ENCODE measurements at regions of chr1 and their contacts with region 1.

Region 1: DNA sequence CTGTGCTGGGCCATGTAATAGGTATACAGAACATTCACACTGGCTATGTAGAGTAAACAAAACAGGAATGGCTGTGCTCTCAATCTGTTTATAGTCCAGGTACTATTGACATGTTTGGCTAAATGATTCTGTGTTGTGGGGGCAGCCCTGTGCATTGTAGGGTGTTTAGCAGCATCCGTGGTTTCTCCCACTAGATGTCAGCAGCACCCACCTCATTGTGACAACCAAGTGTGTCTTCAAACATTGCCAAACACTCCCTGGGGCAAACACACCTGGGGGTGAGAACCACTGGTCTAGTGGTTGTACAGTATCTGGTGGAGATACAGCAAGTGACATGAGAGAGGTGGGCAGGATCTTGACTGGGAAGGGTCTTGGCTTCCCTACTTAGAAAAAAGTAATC is 80.4 kb upstream of the SPATA6 start:
- DNase-seq: no peak
- ATAC-seq: peak in 3 of 4 donors; percentile 31 to 47 (median 41)
- H3K4me3 ChIP-seq: no peak overlapping the region
- H3K27ac ChIP-seq: no peak overlapping the region
- H3K4me1 ChIP-seq: peaks cover 0 to 11% (median 0%) of the 10 kb centered on the region in 12 donors
- H3K27me3 ChIP-seq: no peaks in the 10 kb centered on the region
- CTCF ChIP-seq: peak in 9 of 12 donors; percentile 13 to 43 (median 28)
- POLR2A ChIP-seq: no peak

Region 2: DNA sequence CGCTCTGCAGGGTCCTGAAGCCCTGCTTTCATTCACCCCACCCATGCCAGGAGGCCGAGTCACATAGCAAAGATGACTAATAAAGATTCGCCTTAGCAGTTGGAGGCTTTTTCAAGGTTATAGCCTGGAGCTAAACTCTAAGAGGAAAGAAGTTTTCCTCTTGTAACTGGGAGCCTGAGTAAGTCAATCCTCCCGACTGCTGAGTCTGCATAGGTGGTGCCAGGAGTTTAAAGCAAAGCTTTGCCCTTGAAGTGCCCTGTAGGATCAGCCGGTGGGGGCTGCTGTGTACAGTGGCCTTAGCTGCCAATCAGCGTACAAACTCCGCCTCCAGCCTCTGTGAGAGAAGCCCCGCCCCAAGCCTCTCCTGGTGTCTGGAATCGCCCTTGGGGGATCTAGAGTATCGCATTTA is 67.1 kb after region 1 on chr1:
- intact Hi-C with region 1: no loop called
- DNase-seq: peak in 2 of 5 donors; percentile 27 to 29
- ATAC-seq: peak in 3 of 4 donors; percentile 37 to 58 (median 37)
- H3K4me3 ChIP-seq: peak overlapping the region in 1 of 12 donors; percentile 26
- H3K27ac ChIP-seq: no peak overlapping the region
- H3K4me1 ChIP-seq: peaks cover 0 to 11% (median 0%) of the 10 kb centered on the region in 12 donors
- H3K27me3 ChIP-seq: peaks cover 0 to 10% (median 0%) of the 10 kb centered on the region in 9 donors
- CTCF ChIP-seq: no peak
- POLR2A ChIP-seq: no peak

Region 3: GRCh38 chr1:48697066-48697707 is 144.8 kb after region 1 on chr1:
- intact Hi-C with region 1: loop called in 1 of 10 experiments (anchors 5 kb)
- DNase-seq: peak in 4 of 5 donors; percentile 29 to 68 (median 31)
- ATAC-seq: peak in 1 of 4 donors; percentile 35
- H3K4me3 ChIP-seq: no peak overlapping the region
- H3K27ac ChIP-seq: no peak overlapping the region
- H3K4me1 ChIP-seq: no peaks in the 10 kb centered on the region
- H3K27me3 ChIP-seq: peaks cover 0 to 42% (median under 1%) of the 10 kb centered on the region in 9 donors
- CTCF ChIP-seq: peak; percentile 77 to 91 (median 89)
- POLR2A ChIP-seq: no peak

Region 4: DNA sequence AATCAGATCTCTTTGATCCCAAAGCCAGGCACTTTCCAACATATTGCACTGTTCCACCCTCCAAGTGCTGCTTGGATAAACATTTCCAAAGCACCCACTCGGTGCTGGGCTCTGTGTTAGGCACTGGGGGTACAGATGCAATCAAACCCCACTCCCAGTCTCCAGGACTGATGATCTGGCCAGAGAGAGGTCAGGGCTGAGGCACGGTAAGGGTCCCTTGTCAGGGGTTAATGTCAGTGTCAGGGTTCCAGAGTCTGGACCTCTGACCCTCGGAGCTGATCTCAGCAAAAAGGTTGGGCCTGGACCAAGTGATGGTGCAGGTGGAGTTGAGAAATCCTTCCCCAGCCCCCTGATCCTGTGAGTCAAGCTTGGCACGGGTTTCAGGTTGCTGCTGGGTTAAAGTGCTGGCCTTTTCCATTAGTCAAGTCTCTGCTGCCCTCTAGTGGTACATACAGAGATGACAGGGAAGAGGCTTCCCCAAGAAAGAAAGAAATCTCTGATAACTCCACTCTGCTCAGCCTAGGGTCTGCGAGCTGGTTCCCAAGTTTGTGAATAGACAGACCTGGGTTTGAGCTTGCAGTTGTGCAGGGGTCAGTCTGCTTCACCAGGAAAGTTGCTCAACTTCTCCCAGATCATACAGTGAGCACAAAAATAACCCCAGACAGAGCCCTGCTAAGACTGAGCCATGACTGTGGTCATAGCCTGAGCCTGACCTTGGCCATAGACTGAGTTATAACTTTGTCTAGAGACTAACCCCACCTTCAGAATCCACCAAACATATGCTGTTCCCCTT is 1796.2 kb after region 1 on chr1:
- intact Hi-C with region 1: loop called in 1 of 10 experiments (anchors 10 kb)
- DNase-seq: peak in 4 of 5 donors; percentile 36 to 38 (median 36)
- ATAC-seq: peak in 3 of 4 donors; percentile 56 to 72 (median 68)
- H3K4me3 ChIP-seq: no peak overlapping the region
- H3K27ac ChIP-seq: no peak overlapping the region
- H3K4me1 ChIP-seq: no peaks in the 10 kb centered on the region
- H3K27me3 ChIP-seq: peaks cover 0 to 39% (median 9%) of the 10 kb centered on the region in 9 donors
- CTCF ChIP-seq: peak; percentile 77 to 91 (median 84)
- POLR2A ChIP-seq: no peak